PC-3 (cell line): ENCODE measurements at regions of chrX and their contacts with region 1.

Region 1: GRCh38 chrX:41781502-41781901 is 57.5 kb downstream of the GPR82 start:
- DNase-seq: peak; percentile 69
- ATAC-seq: no peak
- H3K4me3 ChIP-seq: no peak overlapping the region
- H3K27ac ChIP-seq: no peak overlapping the region
- H3K4me1 ChIP-seq: peaks cover 28% of the 10 kb centered on the region
- H3K27me3 ChIP-seq: no peaks in the 10 kb centered on the region
- CTCF ChIP-seq: peak; percentile 87

Region 2: GRCh38 chrX:41759817-41760216 is 21.7 kb before region 1 on chrX:
- CTCF ChIA-PET with region 1: no interaction called
- POLR2A ChIA-PET with region 1: interaction called, 3 read pairs
- intact Hi-C with region 1: loop called (anchors 2 kb)
- DNase-seq: peak; percentile 39
- ATAC-seq: no peak
- H3K4me3 ChIP-seq: no peak overlapping the region
- H3K27ac ChIP-seq: no peak overlapping the region
- H3K4me1 ChIP-seq: peaks cover 34% of the 10 kb centered on the region
- H3K27me3 ChIP-seq: no peaks in the 10 kb centered on the region
- CTCF ChIP-seq: peak; percentile 68

Region 3: DNA sequence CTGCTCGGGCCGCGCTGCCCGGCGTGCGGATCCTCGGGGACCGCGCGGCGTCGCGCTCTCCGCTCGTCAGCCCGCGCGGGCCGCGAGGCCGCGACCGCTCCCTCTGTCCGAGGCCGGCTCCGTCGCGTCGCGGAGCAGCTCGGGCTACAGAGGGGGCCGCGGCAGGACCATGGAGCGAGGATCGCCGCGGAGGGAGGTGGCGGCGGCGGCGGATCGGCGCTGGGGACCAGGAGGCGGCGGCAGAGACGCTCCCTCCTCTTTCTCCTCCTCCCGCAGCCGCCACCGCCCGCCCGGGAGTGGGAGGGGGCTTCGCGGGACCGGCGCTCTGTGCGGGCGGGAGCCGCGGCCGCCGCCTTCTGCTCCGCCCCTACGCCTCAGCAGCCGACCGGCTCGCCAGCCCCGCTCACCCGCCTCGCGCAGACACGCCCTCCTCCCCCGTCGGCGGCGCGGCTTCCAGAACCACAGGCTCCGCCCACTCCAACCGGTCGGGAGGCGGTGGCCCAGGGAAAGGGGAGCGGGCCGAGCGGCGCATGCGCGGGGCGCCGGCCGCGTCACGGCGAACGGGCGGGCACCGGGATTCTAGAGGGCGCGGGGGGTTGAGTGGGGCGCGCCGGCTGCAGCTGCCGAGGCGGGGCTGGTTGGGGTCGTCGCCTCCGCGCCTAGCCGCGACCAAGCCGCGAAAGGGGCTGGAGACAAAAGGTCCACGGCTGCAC is 141.9 kb after region 1 on chrX and contains the start of gene CASK:
- CTCF ChIA-PET with region 1: interaction called, 6 read pairs
- POLR2A ChIA-PET with region 1: no interaction called
- intact Hi-C with region 1: loop called (anchors 1 kb)
- DNase-seq: peak; percentile 91
- ATAC-seq: peak; percentile 84
- H3K4me3 ChIP-seq: peak within 1 kb of the TSS; percentile 98
- H3K27ac ChIP-seq: peak within 1 kb of the TSS; percentile 56
- H3K4me1 ChIP-seq: no peaks in the 10 kb centered on the region; the same call in 1 of the 2 replicates
- H3K27me3 ChIP-seq: no peaks in the 10 kb centered on the region
- CTCF ChIP-seq: no peak
- total RNA-seq, gene CASK: 21.4 and 24.8 TPM in 2 replicates